Activated CD4-positive, alpha-beta memory T cell treated with anti-CD3 and anti-CD28 coated beads for 36 hours (primary cell): ENCODE measurements at regions of chr22 and their contacts with region 1.

Region 1: GRCh38 chr22:42933481-42934091 is 76.5 kb upstream of the ARFGAP3 start:
- DNase-seq: peak; percentile 52
- H3K4me3 Mint-ChIP-seq: peak overlapping the region; percentile 1
- H3K27ac Mint-ChIP-seq: peak overlapping the region; percentile 81
- H3K4me1 Mint-ChIP-seq: peaks cover 72% of the 10 kb centered on the region
- H3K27me3 Mint-ChIP-seq: no peaks in the 10 kb centered on the region

Region 2: GRCh38 chr22:42863349-42863961 is 70.1 kb before region 1 on chr22:
- CTCF ChIA-PET with region 1: no interaction called
- POLR2A ChIA-PET with region 1: no interaction called
- intact Hi-C with region 1: loop called (anchors 5 kb)
- DNase-seq: peak; percentile 57
- H3K4me3 Mint-ChIP-seq: no peak overlapping the region
- H3K27ac Mint-ChIP-seq: peak overlapping the region; percentile 65
- H3K4me1 Mint-ChIP-seq: peaks cover 16% of the 10 kb centered on the region
- H3K27me3 Mint-ChIP-seq: no peaks in the 10 kb centered on the region

Region 3: DNA sequence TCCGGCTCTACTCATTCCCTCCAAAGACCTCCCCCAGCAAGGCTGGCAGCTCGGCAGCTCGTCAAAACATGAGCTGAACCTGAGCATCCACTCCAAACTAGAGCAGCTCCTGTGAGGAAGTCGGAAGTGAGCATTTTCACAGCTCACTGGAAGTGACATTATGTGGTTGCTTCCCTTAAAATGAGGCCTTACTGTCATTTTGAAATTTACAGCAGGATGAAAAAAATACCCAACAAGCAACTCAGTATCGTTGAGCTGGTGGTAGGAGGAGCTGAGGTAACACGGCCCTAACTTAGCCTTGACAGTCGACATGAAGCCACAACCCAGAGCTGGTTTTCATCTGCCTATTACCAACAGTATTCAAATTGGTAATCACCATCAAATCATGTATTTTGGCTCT is 38.5 kb before region 1 on chr22:
- CTCF ChIA-PET with region 1: no interaction called
- POLR2A ChIA-PET with region 1: no interaction called
- intact Hi-C with region 1: loop called (anchors 1 kb)
- DNase-seq: peak; percentile 50
- H3K4me3 Mint-ChIP-seq: no peak overlapping the region
- H3K27ac Mint-ChIP-seq: peak overlapping the region; percentile 18
- H3K4me1 Mint-ChIP-seq: peaks cover 35% of the 10 kb centered on the region
- H3K27me3 Mint-ChIP-seq: no peaks in the 10 kb centered on the region

Region 4: DNA sequence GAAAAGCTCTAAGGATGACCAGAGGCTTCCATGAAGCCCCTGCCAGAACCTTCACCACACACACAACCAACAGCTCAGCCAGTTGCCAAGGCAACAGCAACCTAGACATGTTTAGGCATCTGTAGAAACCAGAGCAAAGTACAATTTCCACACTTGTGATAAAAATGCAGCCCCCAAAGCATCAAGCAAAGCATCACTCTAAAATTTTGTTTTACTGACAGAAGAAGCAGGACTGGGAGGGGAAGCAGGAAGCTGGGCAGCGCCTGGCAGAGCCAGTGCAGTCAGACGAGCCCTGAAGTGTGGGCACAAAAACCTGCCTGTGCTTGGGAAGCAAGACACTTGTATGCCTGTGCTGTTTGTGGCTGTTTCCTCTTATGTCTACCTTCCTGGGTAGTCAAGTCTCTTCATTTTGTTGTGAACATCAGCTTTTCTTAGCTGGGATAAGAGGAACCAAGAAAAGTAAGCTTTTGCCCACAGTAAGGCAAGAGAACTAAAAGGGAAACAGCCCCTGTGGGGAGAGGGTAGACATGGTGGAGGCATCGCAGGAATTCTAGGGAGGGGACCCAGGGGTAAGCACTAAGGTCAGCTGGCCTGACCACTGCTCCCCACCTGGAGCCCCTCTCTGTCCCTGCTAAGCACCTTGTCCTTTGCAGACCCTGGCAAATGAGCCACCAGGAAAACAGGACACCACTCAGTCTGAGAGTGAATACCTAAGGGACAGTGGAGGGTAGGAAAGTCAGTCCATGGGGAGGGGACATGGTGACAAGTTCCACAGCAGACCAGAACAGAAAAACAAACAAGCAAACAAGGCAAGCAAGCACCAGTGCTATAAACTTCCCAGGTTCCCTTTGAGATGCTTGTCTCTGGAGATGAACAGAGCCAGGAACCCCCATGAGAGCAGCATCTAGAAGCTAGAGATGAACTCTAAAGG is 68.0 kb after region 1 on chr22:
- CTCF ChIA-PET with region 1: interaction called, 3 read pairs
- POLR2A ChIA-PET with region 1: no interaction called
- intact Hi-C with region 1: loop called (anchors 5 kb)
- DNase-seq: peak; percentile 25
- H3K4me3 Mint-ChIP-seq: no peak overlapping the region
- H3K27ac Mint-ChIP-seq: no peak overlapping the region
- H3K4me1 Mint-ChIP-seq: peaks cover 86% of the 10 kb centered on the region
- H3K27me3 Mint-ChIP-seq: no peaks in the 10 kb centered on the region

Region 5: GRCh38 chr22:43088979-43089717 is 155.6 kb after region 1 on chr22 and contains the start of gene TTLL1:
- CTCF ChIA-PET with region 1: no interaction called
- POLR2A ChIA-PET with region 1: no interaction called
- intact Hi-C with region 1: no loop called
- DNase-seq: peak; percentile 94
- H3K4me3 Mint-ChIP-seq: peak within 1 kb of the TSS; percentile 97
- H3K27ac Mint-ChIP-seq: peak within 1 kb of the TSS; percentile 90
- H3K4me1 Mint-ChIP-seq: peaks cover 20% of the 10 kb centered on the region
- H3K27me3 Mint-ChIP-seq: no peaks in the 10 kb centered on the region
- total RNA-seq, gene TTLL1: 6.1 to 6.7 TPM